Colonic mucosa (tissue), 4 donors: ENCODE measurements at regions of chr1 and their contacts with region 1.

Region 1: GRCh38 chr1:59971464-59971911 is 44.9 kb upstream of the CYP2J2 start:
- DNase-seq: peak; percentile 82
- H3K4me3 ChIP-seq: no peak overlapping the region
- H3K27ac ChIP-seq: no peak overlapping the region
- H3K4me1 ChIP-seq: no peaks in the 10 kb centered on the region
- H3K27me3 ChIP-seq: no peaks in the 10 kb centered on the region
- CTCF ChIP-seq: peak; percentile 84

Region 2: DNA sequence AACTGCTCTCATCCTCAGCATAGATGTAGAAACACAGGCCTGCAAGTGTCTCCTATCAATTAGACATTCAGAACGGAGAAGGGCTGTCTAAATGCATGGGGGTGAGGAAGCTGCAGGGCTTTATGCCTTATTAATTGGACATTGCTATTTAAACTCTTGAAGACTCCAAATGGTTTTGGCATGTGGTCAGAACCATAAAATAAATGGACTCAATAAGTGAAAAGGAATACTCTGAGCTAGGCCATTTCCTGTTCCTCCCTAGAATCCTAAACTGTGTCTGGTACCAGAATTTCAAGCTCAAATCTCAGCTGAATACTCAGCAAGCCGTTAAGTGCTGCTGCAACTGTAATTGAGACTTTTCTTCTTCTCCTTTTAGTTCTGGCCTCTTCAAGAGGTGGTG is 182.5 kb after region 1 on chr1:
- intact Hi-C with region 1: loop called (anchors 10 kb)
- DNase-seq: no peak
- H3K4me3 ChIP-seq: no peak overlapping the region
- H3K27ac ChIP-seq: no peak overlapping the region
- H3K4me1 ChIP-seq: no peaks in the 10 kb centered on the region
- H3K27me3 ChIP-seq: no peaks in the 10 kb centered on the region
- CTCF ChIP-seq: no peak